ENCODE measurements at regions of chr1 and their contacts with region 1.

Region 1: DNA sequence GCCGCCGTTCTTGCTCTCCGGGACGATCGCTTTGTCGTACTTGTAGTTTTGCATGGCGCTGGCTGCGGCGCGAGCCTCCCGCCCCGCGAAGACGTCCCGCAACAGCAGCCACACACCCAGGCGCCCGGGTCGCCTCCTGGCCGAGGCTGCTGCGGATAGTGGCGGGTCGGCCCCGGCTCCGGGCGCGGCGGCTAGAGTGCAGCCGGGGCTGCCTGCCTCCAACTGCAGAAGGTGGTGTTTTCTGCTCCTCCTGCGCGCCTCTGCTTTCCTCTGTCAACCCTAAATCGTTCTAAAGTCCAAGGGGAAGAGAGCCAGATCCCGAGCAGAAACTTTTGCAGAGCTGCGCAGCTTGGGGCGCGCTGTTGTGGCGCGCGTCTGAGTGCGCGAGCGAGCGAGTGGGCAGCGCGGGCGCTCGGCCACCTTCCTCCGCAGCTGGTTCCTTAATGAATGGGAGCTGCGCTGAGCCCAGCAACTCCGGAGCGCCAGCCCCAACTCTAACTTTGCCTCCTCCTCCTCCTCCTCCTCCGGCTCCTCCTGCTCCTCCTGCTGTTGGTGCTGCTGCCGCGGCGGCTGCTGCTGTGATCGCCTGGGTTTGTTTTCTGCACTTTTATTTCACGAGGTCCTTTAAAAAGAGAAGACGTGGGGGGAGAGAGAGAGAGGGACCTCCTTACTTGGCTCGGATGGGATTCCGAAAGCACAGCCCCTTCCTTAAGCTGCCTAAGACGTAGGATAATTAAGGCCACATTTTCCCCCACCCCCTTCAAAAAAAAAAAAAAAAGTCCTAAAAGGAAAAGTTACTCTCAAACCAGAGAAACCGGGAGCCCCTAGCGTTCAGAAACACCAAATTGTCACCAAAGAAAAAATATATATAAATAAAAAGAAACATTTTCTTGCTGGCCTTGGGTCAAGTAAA is at the start of gene PLPP3:
- DNase-seq: peak; percentile 91
- total RNA-seq, gene PLPP3: 61.0 TPM

Region 2: DNA sequence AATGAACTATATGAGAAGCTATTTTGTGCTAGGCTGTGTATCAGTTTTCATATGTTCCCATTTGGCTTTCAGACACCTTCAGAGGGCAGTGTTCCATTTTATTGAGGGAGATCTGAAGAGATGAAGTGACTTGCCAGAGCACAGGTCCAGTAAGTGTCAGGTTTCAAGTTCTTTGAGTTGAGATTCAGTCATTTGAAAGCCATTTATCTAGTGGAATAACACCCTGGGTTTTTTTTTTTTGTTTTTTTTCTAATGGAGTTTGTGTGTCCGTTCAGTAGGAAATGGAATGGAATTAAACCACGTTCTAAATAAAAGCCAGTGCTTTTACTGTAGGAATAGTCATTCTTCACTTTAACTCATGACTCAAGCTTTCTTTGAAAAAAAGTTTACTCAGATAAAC is 711.2 kb before region 1 on chr1:
- intact Hi-C with region 1: loop called (anchors 10 kb)
- DNase-seq: no peak

Region 3: DNA sequence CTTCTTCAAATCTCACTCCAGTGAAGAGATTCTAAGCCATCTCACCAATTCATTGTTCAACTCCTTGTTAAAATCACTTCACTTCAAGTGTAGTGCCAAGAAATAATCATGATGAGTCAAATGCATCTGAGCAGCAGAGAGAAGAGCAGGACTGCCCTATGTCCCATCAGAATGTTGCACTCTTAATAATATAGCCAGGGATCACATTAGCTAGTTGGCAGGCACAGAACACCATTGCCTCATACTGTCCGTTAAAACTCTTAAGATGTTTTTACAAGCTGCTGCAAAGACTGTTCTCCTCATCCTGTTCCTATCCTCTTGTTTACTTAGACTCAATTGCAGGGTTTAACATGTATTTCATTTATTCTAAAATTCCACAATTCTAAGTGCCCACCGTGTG is 432.8 kb before region 1 on chr1:
- intact Hi-C with region 1: loop called (anchors 5 kb)
- DNase-seq: no peak

Region 4: GRCh38 chr1:56255516-56256152 is 323.6 kb before region 1 on chr1:
- intact Hi-C with region 1: loop called (anchors 10 kb)
- DNase-seq: no peak

Region 5: GRCh38 chr1:56330391-56331026 is 248.7 kb before region 1 on chr1:
- intact Hi-C with region 1: no loop called
- DNase-seq: no peak

Region 6: GRCh38 chr1:56376188-56376984 is 202.8 kb before region 1 on chr1:
- intact Hi-C with region 1: loop called (anchors 2 kb)
- DNase-seq: no peak

Region 7: GRCh38 chr1:56456436-56457101 is 122.7 kb before region 1 on chr1:
- intact Hi-C with region 1: loop called (anchors 5 kb)
- DNase-seq: no peak

Region 8: DNA sequence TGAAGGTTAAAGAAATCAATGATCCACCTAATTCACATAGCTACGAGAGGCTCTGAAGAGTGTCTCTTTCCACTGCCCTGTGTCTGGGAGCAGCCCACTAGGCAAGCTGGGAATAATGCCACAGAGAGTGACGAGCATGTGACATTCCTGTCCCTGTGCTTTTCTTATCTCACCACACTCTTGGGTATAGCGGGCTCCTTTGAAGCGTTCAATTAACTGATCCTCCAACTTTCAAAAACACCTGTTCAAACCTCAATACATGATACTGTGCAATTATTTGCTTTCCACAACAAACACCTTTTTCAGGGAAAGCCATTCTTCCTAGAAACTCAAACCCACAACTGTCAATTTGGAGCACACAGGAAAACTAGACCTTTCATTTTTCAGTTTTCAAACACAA is 43.3 kb before region 1 on chr1:
- intact Hi-C with region 1: loop called (anchors 5 kb)
- DNase-seq: no peak